Activated CD4-positive, alpha-beta T cell treated with anti-CD3 and anti-CD28 coated beads, Interleukin-2, amount 10 ng/mL, durations not matched to agents 24 days and 14 days (primary cell): ENCODE measurements at regions of chr14 and their contacts with region 1.

Region 1: DNA sequence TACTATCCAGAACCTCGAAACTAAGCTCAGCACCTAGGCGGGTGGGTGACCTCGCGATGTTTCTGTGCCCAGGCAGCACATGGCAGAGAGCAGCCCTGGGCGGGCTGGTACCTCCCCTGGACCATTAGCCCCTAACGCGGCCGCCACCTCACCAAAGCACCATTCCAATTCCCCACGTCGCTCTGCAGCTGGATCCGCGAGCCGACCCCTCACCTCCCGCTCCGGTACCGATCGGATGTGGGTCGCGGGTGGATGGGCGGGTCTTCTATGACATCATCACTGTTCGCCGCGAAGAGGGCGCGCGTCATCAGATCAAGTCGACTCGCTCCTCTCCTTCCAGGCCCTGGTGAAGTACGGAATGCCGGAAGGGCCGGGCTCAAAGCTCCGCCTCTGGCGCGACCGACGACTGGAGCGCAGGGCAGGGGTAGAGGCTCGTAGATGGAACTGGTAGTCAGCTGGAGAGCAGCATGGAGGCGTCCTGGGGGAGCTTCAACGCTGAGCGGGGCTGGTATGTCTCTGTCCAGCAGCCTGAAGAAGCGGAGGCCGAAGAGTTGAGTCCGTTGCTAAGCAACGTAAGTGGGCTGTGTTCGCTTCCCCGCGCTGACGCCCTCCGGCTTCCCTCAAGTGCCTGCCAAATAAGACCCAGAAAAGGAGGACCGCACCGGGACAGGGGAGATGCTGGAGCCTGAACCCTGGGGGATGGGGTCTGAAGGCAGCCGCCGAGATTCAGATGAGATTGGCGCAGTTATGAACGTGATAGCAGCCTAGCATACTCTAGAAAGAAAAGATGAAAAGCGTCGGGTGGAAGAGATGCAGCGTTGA is at the starts of genes SLC38A6 and TRMT5:
- DNase-seq: peak; percentile 98
- H3K4me3 Mint-ChIP-seq: no peak within 1 kb of the TSS
- H3K27ac Mint-ChIP-seq: no peak within 1 kb of the TSS
- H3K4me1 Mint-ChIP-seq: peaks cover 21% of the 10 kb centered on the region
- H3K27me3 Mint-ChIP-seq: no peaks in the 10 kb centered on the region
- total RNA-seq, gene SLC38A6: 4.7 and 5.9 TPM in 2 replicates
- total RNA-seq, gene TRMT5: 16.1 and 18.0 TPM in 2 replicates

Region 2: GRCh38 chr14:60649875-60650372 is 331.1 kb before region 1 on chr14:
- intact Hi-C with region 1: loop called (anchors 5 kb)
- DNase-seq: peak; percentile 56
- H3K4me3 Mint-ChIP-seq: peak overlapping the region; percentile 35
- H3K27ac Mint-ChIP-seq: peak overlapping the region; percentile 74
- H3K4me1 Mint-ChIP-seq: peaks cover 30% of the 10 kb centered on the region
- H3K27me3 Mint-ChIP-seq: peaks cover 90% of the 10 kb centered on the region